ENCODE measurements at regions of chr11 and their contacts with region 1.

Region 1: GRCh38 chr11:63866211-63866610 is 27.3 kb downstream of the MARK2 start:
- DNase-seq: peak; percentile 95
- ATAC-seq: peak; percentile 83
- H3K4me3 Mint-ChIP-seq: no peak overlapping the region
- H3K27ac Mint-ChIP-seq: peak overlapping the region; percentile 79
- H3K4me1 Mint-ChIP-seq: peaks cover 77% of the 10 kb centered on the region
- H3K27me3 Mint-ChIP-seq: no peaks in the 10 kb centered on the region
- CTCF ChIP-seq: no peak

Region 2: DNA sequence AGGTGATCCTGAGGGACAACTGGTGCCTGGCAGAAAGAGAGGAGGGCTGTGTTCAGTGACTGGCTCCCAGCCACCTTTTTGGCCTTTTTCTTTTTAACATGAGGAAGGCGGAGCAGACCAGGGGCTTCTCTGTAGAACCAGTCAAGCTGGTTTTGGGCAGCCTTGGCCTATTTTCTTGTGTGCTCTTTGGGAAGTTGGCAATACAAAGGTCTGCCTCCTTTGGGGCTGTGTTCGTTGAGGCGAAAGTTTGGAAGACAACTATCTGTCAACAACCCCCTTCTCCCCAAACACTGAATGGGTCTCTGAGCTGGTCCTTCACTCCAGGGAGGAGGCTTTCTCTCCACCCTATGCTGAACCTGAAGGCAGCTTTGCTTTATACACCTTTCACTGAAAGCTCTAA is 18.8 kb before region 1 on chr11:
- CTCF ChIA-PET with region 1: interaction called, 4 read pairs
- POLR2A ChIA-PET with region 1: interaction called, 6 read pairs
- intact Hi-C with region 1: loop called (anchors 1 kb)
- DNase-seq: no peak
- ATAC-seq: no peak
- H3K4me3 Mint-ChIP-seq: no peak overlapping the region
- H3K27ac Mint-ChIP-seq: peak overlapping the region; percentile 46
- H3K4me1 Mint-ChIP-seq: peaks cover 81% of the 10 kb centered on the region
- H3K27me3 Mint-ChIP-seq: no peaks in the 10 kb centered on the region
- CTCF ChIP-seq: no peak

Region 3: DNA sequence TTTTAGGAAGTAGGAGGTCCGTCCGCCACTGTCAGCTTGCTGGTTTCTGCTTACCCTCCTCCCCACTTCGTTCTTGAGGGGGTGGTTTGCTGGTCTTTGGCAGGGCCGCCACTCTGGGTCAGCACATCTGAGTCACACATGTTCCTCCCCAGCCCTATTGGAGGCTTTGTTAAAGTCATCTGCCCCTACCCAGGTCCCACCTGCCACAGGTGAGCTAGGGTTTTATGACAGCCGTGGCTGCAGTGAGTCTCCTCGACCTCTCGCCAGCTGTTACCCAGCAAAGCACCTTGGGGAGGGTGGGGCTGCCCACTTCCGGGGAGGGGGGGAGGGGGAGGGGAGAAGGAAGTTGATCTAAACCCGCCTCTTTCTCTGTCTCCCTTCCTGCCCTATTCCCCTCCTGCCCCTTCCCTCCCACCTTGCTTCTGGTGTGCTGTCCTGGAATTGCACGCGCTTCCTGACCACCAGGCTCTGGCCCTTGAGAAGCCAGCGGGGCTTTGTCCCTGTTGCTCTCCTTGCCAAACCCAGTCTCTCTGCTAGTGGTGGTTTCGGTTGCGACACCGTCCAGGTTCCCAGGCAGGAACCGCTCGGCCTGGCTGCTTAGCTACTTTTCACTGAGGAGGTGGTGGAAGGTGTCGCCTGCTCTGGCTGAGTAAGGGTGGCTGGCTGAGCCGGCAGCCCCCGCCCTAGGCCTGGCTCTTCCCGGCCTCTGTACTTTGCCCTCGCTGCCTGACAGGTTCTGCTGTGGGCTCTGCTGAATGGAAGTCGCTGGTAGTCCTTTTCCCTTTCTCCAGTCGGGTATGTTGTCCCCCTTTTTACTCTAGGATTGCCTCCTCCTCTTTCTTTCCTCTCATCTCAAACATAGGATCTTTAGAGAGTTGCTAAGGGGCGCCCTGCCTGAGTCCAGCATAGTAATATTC is 22.2 kb after region 1 on chr11:
- CTCF ChIA-PET with region 1: interaction called, 10 read pairs
- POLR2A ChIA-PET with region 1: interaction called, 4 read pairs
- intact Hi-C with region 1: loop called (anchors 1 kb)
- DNase-seq: peak; percentile 77
- ATAC-seq: peak; percentile 80
- H3K4me3 Mint-ChIP-seq: peak overlapping the region; percentile 86
- H3K27ac Mint-ChIP-seq: peak overlapping the region; percentile 93
- H3K4me1 Mint-ChIP-seq: peaks cover 75% of the 10 kb centered on the region
- H3K27me3 Mint-ChIP-seq: no peaks in the 10 kb centered on the region
- CTCF ChIP-seq: no peak